ENCODE measurements at regions of chr9 and their contacts with region 1.

Region 1: GRCh38 chr9:121992571-121993212 is 100.4 kb downstream of the TTLL11 start:
- DNase-seq: peak; percentile 92
- H3K4me3 ChIP-seq: no peak overlapping the region
- H3K27ac ChIP-seq: no peak overlapping the region
- H3K4me1 ChIP-seq: peaks cover 4 to 14% (median 9%) of the 10 kb centered on the region in 4 donors
- H3K27me3 ChIP-seq: no peaks in the 10 kb centered on the region
- CTCF ChIP-seq: peak; percentile 82 to 86 (median 83)
- EP300 ChIP-seq: no peak
- POLR2A ChIP-seq: no peak

Region 2: DNA sequence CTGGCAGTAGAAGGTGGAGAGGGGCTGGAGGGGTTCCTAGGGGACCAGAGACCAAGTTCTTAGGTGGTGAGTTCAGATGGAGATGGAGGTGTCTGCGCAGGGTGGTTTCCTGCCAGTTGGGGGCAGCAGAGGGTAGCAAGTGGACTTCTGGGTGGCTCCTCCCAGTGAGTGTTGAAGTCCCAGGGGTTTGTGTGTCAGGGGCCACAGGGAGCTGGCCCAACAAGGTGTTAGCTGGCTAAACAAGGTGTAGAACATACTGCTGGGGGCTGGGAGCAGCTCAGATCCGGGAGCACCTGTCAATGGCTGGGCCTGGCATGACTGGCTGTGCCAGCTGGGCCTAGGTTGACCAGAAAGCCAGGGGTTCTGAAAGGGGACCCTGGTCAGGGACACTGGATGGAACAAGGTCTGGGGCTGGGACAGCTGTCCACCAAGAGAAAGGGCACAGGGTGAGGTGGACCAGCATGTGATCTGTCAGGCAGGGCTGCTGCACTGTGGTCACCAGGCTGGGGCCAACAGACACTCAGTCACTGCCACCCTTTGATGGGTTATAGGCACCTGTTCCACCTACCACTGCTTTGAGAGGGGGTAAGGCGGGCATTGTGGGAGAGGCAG is 305.7 kb before region 1 on chr9:
- intact Hi-C with region 1: loop called (anchors 2 kb)
- DNase-seq: no peak
- H3K4me3 ChIP-seq: no peak overlapping the region
- H3K27ac ChIP-seq: peak overlapping the region in 1 of 4 donors; percentile 47
- H3K4me1 ChIP-seq: peaks cover 26 to 53% (median 36%) of the 10 kb centered on the region in 4 donors
- H3K27me3 ChIP-seq: no peaks in the 10 kb centered on the region
- CTCF ChIP-seq: peak; percentile 75 to 90 (median 80)
- EP300 ChIP-seq: no peak
- POLR2A ChIP-seq: no peak

Region 3: DNA sequence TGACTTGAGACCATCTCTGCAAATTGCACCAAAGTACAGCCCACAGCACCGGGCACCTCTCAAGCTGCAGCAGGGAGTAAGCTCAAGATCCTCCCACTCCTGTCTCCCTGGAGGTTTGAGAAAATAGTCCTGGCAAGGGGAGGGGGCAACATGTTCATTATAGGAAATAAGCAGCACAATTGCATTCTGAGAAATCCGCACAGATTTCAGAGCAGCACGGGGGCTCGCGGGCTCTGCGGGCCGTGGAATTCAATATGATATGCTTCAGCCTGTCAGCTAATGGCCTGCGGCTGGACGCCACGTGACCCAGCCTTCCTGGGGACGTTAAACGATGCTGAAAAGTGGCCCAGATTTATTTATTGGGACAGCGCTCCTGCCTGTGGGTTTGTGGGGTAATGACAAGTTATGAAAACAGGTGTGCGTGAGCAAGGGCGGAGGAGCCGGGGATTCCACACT is 184.8 kb before region 1 on chr9:
- intact Hi-C with region 1: loop called (anchors 10 kb)
- DNase-seq: no peak
- H3K4me3 ChIP-seq: no peak overlapping the region
- H3K27ac ChIP-seq: no peak overlapping the region
- H3K4me1 ChIP-seq: peaks cover 0 to 5% (median 0%) of the 10 kb centered on the region in 4 donors
- H3K27me3 ChIP-seq: no peaks in the 10 kb centered on the region
- CTCF ChIP-seq: peak in 1 of 3 experiments; percentile 8
- EP300 ChIP-seq: no peak
- POLR2A ChIP-seq: no peak

Measured in esophagus muscularis mucosa (tissue), 4 donors.